Mammary epithelial cell (primary cell): ENCODE measurements at regions of chr9 and their contacts with region 1.

Region 1: DNA sequence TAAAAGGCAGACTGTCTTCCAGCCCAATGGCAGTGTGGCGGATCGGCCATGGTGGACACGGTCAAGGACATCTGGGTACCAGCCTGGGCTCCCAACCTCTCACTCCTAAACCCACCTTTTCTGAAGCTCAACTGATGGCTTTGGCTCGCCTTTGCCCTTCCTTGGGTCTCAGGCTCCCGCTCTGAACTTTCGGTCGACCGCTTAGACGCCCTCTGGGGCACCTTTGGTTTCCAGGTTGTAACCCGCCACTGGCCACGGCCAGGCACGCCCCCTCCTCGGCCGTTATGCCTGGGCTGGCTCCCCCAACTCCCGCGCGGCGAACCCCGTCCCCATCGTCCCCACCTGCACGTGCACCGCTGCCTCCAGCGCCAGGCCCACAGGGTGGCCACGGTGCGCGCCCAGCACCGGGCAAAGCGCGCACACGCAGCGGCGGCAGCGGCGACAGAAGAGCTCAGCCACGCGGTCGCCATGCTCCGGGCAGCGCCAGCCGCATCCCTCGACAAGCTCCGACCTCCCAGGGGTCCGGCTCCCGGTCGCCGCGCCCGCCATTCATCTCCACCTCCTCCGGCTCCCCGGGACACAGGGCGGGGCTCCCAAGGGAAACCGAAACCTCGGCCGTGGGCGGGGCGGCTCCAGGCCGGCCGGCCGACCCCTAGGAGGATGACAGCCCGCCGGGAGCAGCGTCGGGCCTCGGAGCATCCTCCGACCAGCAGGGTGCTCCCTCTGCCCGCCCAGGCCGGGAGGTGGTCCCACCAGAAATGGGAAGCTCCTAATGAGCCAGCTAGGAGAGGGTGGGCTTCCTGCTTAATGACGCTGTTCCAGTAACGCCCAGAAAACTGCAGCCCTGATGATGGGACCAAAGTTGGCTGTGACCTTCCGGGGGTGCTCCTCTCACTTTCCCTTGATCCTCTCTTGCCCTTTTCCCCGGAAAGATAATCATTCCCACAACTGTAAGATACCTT is at the start of gene TRIM14:
- DNase-seq: peak; percentile 64
- H3K4me3 ChIP-seq: peak within 1 kb of the TSS; percentile 37 to 68 (median 62)
- H3K27ac ChIP-seq: peak within 1 kb of the TSS; percentile 37
- H3K4me1 ChIP-seq: peaks cover 6% of the 10 kb centered on the region
- H3K27me3 ChIP-seq: no peaks in the 10 kb centered on the region
- CTCF ChIP-seq: peak in 1 of 2 donors; percentile 20
- total RNA-seq, gene TRIM14: 11.3 to 17.6 TPM

Region 2: DNA sequence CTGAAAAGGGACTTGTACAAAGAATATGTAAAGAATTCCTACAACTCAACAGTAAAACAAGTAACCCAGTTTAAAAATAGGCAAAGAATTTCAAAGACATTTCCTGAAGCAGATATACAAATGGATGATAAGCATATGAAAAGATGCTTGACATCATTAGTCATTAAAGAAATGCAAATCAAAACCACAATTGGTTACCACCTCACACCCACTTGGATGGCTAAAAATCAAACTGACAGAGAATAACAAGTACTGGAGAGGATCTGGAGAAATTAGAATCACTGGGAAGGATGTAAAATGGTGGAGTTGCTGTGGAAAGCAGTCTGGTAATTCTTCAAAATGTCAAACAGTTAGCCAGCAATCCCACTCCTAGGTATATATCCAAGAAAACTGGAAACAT is 278.4 kb before region 1 on chr9:
- CTCF ChIA-PET with region 1: no interaction called
- dilution Hi-C with region 1: no loop called
- in situ Hi-C with region 1: no loop called
- intact Hi-C with region 1: no loop called
- DNase-seq: peak; percentile 41
- H3K4me3 ChIP-seq: no peak overlapping the region
- H3K27ac ChIP-seq: no peak overlapping the region
- H3K4me1 ChIP-seq: peaks cover 10% of the 10 kb centered on the region
- H3K27me3 ChIP-seq: no peaks in the 10 kb centered on the region
- CTCF ChIP-seq: no peak

Region 3: GRCh38 chr9:98158071-98158831 is 39.3 kb after region 1 on chr9:
- CTCF ChIA-PET with region 1: interaction called, 17 read pairs
- dilution Hi-C with region 1: no loop called
- in situ Hi-C with region 1: no loop called
- intact Hi-C with region 1: loop called (anchors 5 kb)
- DNase-seq: no peak
- H3K4me3 ChIP-seq: no peak overlapping the region
- H3K27ac ChIP-seq: no peak overlapping the region
- H3K4me1 ChIP-seq: peaks cover 13% of the 10 kb centered on the region
- H3K27me3 ChIP-seq: no peaks in the 10 kb centered on the region
- CTCF ChIP-seq: no peak

Region 4: DNA sequence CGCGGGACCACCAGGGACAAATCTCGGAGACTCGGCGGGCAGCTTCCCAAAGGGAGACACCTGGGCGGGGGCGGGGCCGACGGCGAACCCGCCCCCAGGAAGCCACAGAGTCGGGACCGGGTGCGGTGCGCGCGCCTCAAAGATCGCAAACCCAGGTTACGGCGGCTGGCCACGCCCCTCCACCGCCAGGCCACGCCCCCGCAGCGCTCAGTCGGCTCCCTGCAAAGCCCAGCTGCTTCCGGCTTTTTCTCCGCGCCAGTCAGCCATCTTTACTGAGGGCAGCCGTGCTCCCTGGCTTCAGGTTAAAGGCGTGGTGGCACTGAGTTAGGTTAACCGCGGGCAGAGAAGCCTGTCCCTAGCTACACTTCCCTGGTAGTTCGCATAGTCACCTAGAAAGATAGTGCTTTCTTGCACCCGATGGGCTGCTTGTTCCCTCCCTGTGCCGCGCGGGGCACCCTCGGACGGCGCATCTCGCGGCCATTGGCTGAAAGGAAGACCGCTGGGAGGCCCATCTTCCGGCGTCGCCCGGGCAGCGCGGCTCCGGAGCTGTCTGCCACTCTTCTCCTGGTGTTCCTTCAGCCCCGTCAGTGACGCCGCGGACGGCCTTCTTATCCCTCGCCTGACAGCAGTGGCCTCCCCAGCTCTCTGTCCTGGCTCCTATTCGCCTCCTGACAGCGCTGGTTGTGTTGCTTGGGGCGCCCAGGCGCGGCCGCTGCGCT is 136.8 kb after region 1 on chr9 and contains the start of gene TBC1D2:
- CTCF ChIA-PET with region 1: interaction called, 12 read pairs
- dilution Hi-C with region 1: no loop called
- in situ Hi-C with region 1: no loop called
- intact Hi-C with region 1: no loop called
- DNase-seq: peak; percentile 94
- H3K4me3 ChIP-seq: peak within 1 kb of the TSS; percentile 69 to 97 (median 93)
- H3K27ac ChIP-seq: peak within 1 kb of the TSS; percentile 72
- H3K4me1 ChIP-seq: peaks cover 39% of the 10 kb centered on the region
- H3K27me3 ChIP-seq: no peaks in the 10 kb centered on the region
- CTCF ChIP-seq: peak in 1 of 2 donors; percentile 35
- total RNA-seq, gene TBC1D2: 86.7 to 98.2 TPM

Region 5: GRCh38 chr9:98263482-98264357 is 144.8 kb after region 1 on chr9:
- CTCF ChIA-PET with region 1: no interaction called
- dilution Hi-C with region 1: no loop called
- in situ Hi-C with region 1: no loop called
- intact Hi-C with region 1: loop called (anchors 1 kb)
- DNase-seq: peak; percentile 51
- H3K4me3 ChIP-seq: no peak overlapping the region
- H3K27ac ChIP-seq: no peak overlapping the region
- H3K4me1 ChIP-seq: no peaks in the 10 kb centered on the region
- H3K27me3 ChIP-seq: peaks cover 2% of the 10 kb centered on the region
- CTCF ChIP-seq: peak; percentile 98